MCF 10A (cell line): ENCODE measurements at regions of chr16 and their contacts with region 1.

Region 1: GRCh38 chr16:49407873-49408550 is 34.4 kb downstream of the C16orf78 start:
- DNase-seq: peak; percentile 79
- H3K4me3 Mint-ChIP-seq: no peak overlapping the region
- H3K27ac Mint-ChIP-seq: no peak overlapping the region
- H3K4me1 Mint-ChIP-seq: no peaks in the 10 kb centered on the region
- H3K27me3 Mint-ChIP-seq: no peaks in the 10 kb centered on the region
- CTCF ChIP-seq: peak; percentile 91

Region 2: GRCh38 chr16:49216593-49216992 is 191.4 kb before region 1 on chr16:
- CTCF ChIA-PET with region 1: no interaction called
- POLR2A ChIA-PET with region 1: no interaction called
- intact Hi-C with region 1: no loop called
- DNase-seq: no peak
- H3K4me3 Mint-ChIP-seq: no peak overlapping the region
- H3K27ac Mint-ChIP-seq: no peak overlapping the region
- H3K4me1 Mint-ChIP-seq: no peaks in the 10 kb centered on the region
- H3K27me3 Mint-ChIP-seq: peaks cover 14% of the 10 kb centered on the region
- CTCF ChIP-seq: no peak

Region 3: DNA sequence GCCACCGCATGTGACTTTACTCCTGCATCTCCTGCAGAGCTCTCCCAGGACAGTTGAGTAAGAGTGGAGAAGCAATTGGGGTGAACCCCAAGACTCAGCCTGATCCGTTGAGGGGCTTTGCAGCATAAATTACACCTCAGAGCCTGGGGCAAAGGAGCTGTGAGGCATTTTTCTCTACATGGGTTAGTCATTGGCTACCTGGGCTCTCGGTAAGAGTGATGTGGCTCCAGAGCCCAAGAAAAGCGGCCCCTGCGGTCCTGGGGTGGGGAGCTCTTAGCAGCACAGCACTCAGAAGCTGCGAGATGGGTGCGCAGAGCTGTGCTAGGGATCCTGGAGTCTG is 74.8 kb before region 1 on chr16:
- CTCF ChIA-PET with region 1: no interaction called
- POLR2A ChIA-PET with region 1: no interaction called
- intact Hi-C with region 1: no loop called
- DNase-seq: no peak
- H3K4me3 Mint-ChIP-seq: no peak overlapping the region
- H3K27ac Mint-ChIP-seq: no peak overlapping the region
- H3K4me1 Mint-ChIP-seq: no peaks in the 10 kb centered on the region
- H3K27me3 Mint-ChIP-seq: peaks cover 20% of the 10 kb centered on the region
- CTCF ChIP-seq: no peak

Region 4: DNA sequence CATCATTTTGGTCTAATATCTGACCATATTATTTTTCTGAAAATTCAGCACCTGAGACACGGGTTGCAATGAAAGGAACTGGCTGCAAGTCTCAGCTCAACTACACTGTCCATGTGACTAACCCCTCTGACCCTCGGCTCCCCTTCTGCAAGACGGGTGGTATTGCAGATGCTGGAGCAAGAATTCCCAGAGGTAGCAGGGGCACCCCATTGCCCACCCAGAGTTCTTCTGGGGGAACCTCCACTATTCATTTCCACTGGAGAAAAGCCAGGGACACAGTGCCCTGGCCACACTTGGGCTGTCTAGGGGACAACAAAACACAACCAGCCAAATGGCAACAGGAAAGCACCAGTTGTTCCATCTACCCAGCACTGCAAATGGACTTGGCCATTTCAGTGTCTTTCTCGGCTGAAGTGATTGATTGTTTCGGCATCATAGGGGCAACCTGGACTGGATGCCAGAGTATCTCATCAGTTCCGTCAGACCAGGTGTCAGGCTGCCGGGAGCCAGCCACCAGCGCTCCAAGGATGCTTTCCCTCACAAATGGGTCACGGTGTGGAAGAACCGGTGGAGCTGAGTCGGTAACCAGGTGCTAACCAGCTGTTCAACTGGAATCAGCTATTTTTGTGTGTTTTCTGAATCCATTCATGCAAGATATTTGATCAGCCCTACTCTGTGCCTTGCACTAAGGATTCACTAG is 23.7 kb after region 1 on chr16:
- CTCF ChIA-PET with region 1: interaction called, 14 read pairs
- POLR2A ChIA-PET with region 1: no interaction called
- intact Hi-C with region 1: no loop called
- DNase-seq: no peak
- H3K4me3 Mint-ChIP-seq: no peak overlapping the region
- H3K27ac Mint-ChIP-seq: no peak overlapping the region
- H3K4me1 Mint-ChIP-seq: no peaks in the 10 kb centered on the region
- H3K27me3 Mint-ChIP-seq: peaks cover 41% of the 10 kb centered on the region
- CTCF ChIP-seq: no peak

Region 5: DNA sequence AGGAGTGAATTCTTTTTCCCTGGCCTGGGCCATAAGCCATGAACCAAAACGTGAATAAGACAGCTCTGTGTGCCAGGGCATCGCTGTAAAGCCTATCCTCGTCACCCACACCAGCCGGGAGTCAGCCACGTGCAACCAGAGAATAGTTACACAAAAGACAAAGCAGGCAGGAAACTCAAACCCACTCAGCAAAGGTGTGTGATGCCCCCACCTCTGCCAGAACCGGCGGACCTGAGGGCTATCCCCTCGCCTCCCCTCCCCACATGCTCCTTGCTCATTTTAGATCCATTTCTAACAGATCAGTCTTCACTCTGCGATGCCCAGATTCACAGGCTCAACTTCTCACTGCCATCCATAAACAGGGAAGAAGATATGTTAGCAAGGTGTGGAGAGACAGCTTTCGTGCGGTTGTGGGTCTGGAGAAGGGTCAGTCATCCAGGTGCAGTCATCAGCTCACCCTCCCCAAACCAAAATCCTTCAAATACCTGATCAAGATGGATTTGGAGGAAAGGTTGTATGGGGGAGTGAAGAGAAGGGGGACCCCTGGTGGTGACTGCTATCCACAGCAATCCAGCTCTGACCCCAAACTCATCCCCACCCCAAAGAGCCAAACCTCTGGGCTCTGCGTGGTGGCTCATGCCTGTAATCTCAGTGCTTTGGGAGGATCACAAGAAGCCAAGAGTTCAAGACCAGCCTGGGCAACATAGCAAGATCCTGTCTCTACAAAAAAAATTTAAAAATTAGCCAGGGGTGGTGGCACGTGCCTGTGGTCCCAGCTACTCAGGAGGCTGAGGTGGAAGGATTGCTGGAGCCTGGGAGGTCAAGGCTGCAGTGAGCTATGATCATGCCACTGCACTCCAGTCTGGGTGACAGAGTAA is 184.8 kb after region 1 on chr16:
- CTCF ChIA-PET with region 1: interaction called, 18 read pairs
- POLR2A ChIA-PET with region 1: no interaction called
- intact Hi-C with region 1: loop called (anchors 1 kb)
- DNase-seq: peak; percentile 40
- H3K4me3 Mint-ChIP-seq: no peak overlapping the region
- H3K27ac Mint-ChIP-seq: no peak overlapping the region
- H3K4me1 Mint-ChIP-seq: no peaks in the 10 kb centered on the region
- H3K27me3 Mint-ChIP-seq: peaks cover 82% of the 10 kb centered on the region
- CTCF ChIP-seq: peak; percentile 69